Activated naive CD4-positive, alpha-beta T cell treated with anti-CD3 and anti-CD28 coated beads for 36 hours (primary cell): ENCODE measurements at regions of chr4 and their contacts with region 1.

Region 1: GRCh38 chr4:121150486-121150885 is 13.6 kb downstream of the TNIP3 start:
- DNase-seq: peak; percentile 45
- H3K4me3 Mint-ChIP-seq: no peak overlapping the region
- H3K27ac Mint-ChIP-seq: no peak overlapping the region
- H3K4me1 Mint-ChIP-seq: peaks cover 62% of the 10 kb centered on the region
- H3K27me3 Mint-ChIP-seq: no peaks in the 10 kb centered on the region

Region 2: GRCh38 chr4:121139533-121140222 is 10.8 kb before region 1 on chr4:
- CTCF ChIA-PET with region 1: interaction called, 3 read pairs
- intact Hi-C with region 1: loop called (anchors 1 kb)
- DNase-seq: peak; percentile 29
- H3K4me3 Mint-ChIP-seq: no peak overlapping the region
- H3K27ac Mint-ChIP-seq: peak overlapping the region; percentile 79
- H3K4me1 Mint-ChIP-seq: peaks cover 57% of the 10 kb centered on the region
- H3K27me3 Mint-ChIP-seq: no peaks in the 10 kb centered on the region

Region 3: GRCh38 chr4:121182296-121182695 is 31.8 kb after region 1 on chr4:
- CTCF ChIA-PET with region 1: interaction called, 3 read pairs
- intact Hi-C with region 1: loop called (anchors 1 kb)
- DNase-seq: peak; percentile 30
- H3K4me3 Mint-ChIP-seq: peak overlapping the region; percentile 71
- H3K27ac Mint-ChIP-seq: peak overlapping the region; percentile 91
- H3K4me1 Mint-ChIP-seq: peaks cover 60% of the 10 kb centered on the region
- H3K27me3 Mint-ChIP-seq: no peaks in the 10 kb centered on the region

Region 4: GRCh38 chr4:121784975-121785374 is 634.5 kb after region 1 on chr4:
- CTCF ChIA-PET with region 1: no interaction called
- intact Hi-C with region 1: no loop called
- DNase-seq: no peak
- H3K4me3 Mint-ChIP-seq: no peak overlapping the region
- H3K27ac Mint-ChIP-seq: no peak overlapping the region
- H3K4me1 Mint-ChIP-seq: peaks cover 5% of the 10 kb centered on the region
- H3K27me3 Mint-ChIP-seq: peaks cover 33% of the 10 kb centered on the region